MCF 10A (cell line): ENCODE measurements at regions of chr3 and their contacts with region 1.

Region 1: GRCh38 chr3:142850386-142851023 is 38.4 kb downstream of the PCOLCE2 start:
- DNase-seq: peak; percentile 94
- H3K4me3 Mint-ChIP-seq: no peak overlapping the region
- H3K27ac Mint-ChIP-seq: no peak overlapping the region
- H3K4me1 Mint-ChIP-seq: peaks cover 18% of the 10 kb centered on the region
- H3K27me3 Mint-ChIP-seq: no peaks in the 10 kb centered on the region
- CTCF ChIP-seq: no peak

Region 2: GRCh38 chr3:142863010-142863715 is 12.7 kb after region 1 on chr3:
- CTCF ChIA-PET with region 1: interaction called, 5 read pairs
- POLR2A ChIA-PET with region 1: interaction called, 26 read pairs
- intact Hi-C with region 1: no loop called
- DNase-seq: peak; percentile 97
- H3K4me3 Mint-ChIP-seq: peak overlapping the region; percentile 62
- H3K27ac Mint-ChIP-seq: peak overlapping the region; percentile 88
- H3K4me1 Mint-ChIP-seq: peaks cover 19% of the 10 kb centered on the region
- H3K27me3 Mint-ChIP-seq: no peaks in the 10 kb centered on the region
- CTCF ChIP-seq: no peak